ENCODE measurements at regions of chr9 and their contacts with region 1.

Region 1: GRCh38 chr9:98034593-98035546 is 21.7 kb upstream of the NANS start:
- DNase-seq: peak; percentile 93
- ATAC-seq: peak; percentile 96
- H3K4me3 Mint-ChIP-seq: no peak overlapping the region; the same call in 1 of the 2 replicates
- H3K27ac Mint-ChIP-seq: no peak overlapping the region
- H3K4me1 Mint-ChIP-seq: peaks cover 5% of the 10 kb centered on the region; the same call in 1 of the 2 replicates
- H3K27me3 Mint-ChIP-seq: peaks cover 21% of the 10 kb centered on the region
- CTCF ChIP-seq: peak; percentile 94

Region 2: GRCh38 chr9:97921959-97922724 is 112.7 kb before region 1 on chr9 and contains the start of gene TRMO:
- CTCF ChIA-PET with region 1: interaction called, 10 read pairs
- POLR2A ChIA-PET with region 1: no interaction called
- DNase-seq: peak; percentile 93
- ATAC-seq: peak; percentile 92
- H3K4me3 Mint-ChIP-seq: peak within 1 kb of the TSS; percentile 69
- H3K27ac Mint-ChIP-seq: peak within 1 kb of the TSS; percentile 87
- H3K4me1 Mint-ChIP-seq: peaks cover 7% of the 10 kb centered on the region
- H3K27me3 Mint-ChIP-seq: peaks cover 56% of the 10 kb centered on the region
- CTCF ChIP-seq: peak; percentile 39; the same call in 1 of the 2 replicates
- total RNA-seq, gene TRMO: 3.3 to 4.6 TPM (median 3.9 TPM) in 3 replicates

Region 3: GRCh38 chr9:98010445-98010844 is 24.4 kb before region 1 on chr9:
- CTCF ChIA-PET with region 1: interaction called, 10 read pairs
- POLR2A ChIA-PET with region 1: no interaction called
- DNase-seq: peak; percentile 16
- ATAC-seq: peak; percentile 77
- H3K4me3 Mint-ChIP-seq: no peak overlapping the region
- H3K27ac Mint-ChIP-seq: no peak overlapping the region
- H3K4me1 Mint-ChIP-seq: peaks cover 3% of the 10 kb centered on the region
- H3K27me3 Mint-ChIP-seq: no peaks in the 10 kb centered on the region
- CTCF ChIP-seq: no peak

Region 4: DNA sequence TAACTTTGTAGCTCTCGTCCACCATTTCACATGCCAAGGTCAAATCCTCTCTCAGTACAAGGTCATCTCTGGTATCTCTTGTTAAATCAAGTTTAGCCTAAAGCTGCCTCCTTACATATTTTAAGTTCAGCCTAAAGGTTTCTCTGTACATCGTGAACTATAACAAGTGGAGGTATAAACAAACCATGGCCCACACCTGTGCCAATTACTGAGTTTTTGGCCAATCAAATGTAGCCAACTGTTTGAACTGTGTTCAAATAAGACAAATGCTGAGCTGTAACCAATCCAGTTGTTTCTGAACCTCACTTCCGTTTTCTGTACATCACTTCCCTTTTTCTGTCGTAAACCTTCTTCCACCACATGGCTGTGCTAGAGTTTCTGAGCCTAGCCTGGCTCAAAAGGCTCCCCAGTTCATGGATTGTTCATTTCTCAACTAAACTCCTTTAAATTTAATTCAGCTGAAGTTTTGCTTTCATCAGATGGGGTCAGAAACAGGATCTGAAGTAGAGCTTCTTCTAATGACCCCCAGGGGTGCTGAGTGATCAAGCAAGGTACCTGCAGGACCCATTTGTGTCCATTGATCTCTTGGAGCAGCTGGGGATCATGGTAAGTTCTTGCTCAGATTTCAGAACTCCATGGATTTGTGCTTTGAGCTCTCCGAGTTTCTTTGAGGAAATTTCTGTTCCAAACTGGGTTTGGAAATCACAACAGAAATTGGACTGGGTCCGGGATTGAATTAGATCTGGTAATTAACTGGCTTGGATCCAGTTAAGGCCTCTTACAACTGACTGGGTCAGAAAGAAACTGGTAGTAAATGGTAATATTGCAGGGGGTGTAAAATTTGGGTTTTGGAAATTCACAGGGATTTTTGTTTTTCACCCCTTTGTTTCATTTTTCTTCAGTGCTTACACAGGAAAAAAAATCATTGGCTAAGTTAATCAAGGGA is 10.6 kb after region 1 on chr9:
- CTCF ChIA-PET with region 1: interaction called, 29 read pairs
- POLR2A ChIA-PET with region 1: no interaction called
- DNase-seq: no peak
- ATAC-seq: no peak
- H3K4me3 Mint-ChIP-seq: no peak overlapping the region
- H3K27ac Mint-ChIP-seq: no peak overlapping the region
- H3K4me1 Mint-ChIP-seq: no peaks in the 10 kb centered on the region
- H3K27me3 Mint-ChIP-seq: peaks cover 4% of the 10 kb centered on the region
- CTCF ChIP-seq: no peak

Region 5: GRCh38 chr9:98255578-98256296 is 220.9 kb after region 1 on chr9 and contains the start of gene TBC1D2:
- CTCF ChIA-PET with region 1: interaction called, 14 read pairs
- POLR2A ChIA-PET with region 1: no interaction called
- DNase-seq: peak; percentile 98
- ATAC-seq: peak; percentile 90
- H3K4me3 Mint-ChIP-seq: peak within 1 kb of the TSS; percentile 93
- H3K27ac Mint-ChIP-seq: peak within 1 kb of the TSS; percentile 95
- H3K4me1 Mint-ChIP-seq: peaks cover 42% of the 10 kb centered on the region
- H3K27me3 Mint-ChIP-seq: no peaks in the 10 kb centered on the region
- CTCF ChIP-seq: no peak
- total RNA-seq, gene TBC1D2: 10.6 to 11.4 TPM (median 11.1 TPM) in 3 replicates

Measured in WTC11 (cell line).